H1 (cell line): ENCODE measurements at regions of chr19 and their contacts with region 1.

Region 1: GRCh38 chr19:5967994-5968430 is 9.9 kb downstream of the RANBP3 start:
- DNase-seq: peak in 1 of 2 experiments; percentile 81
- H3K4me3 ChIP-seq: peak overlapping the region in 1 of 4 experiments; percentile 7; a peak in 2 of 8 replicates
- H3K27ac ChIP-seq: peak overlapping the region; percentile 57
- H3K4me1 ChIP-seq: peaks cover 9 to 16% (median 13%) of the 10 kb centered on the region in 4 experiments
- H3K27me3 ChIP-seq: no peaks in the 10 kb centered on the region
- CTCF ChIP-seq: peak; percentile 69 to 82 (median 78)
- EP300 ChIP-seq: no peak
- POLR2A ChIP-seq: no peak
- RAD21 ChIP-seq: peak; percentile 42 to 59

Region 2: GRCh38 chr19:5913739-5914357 is 54.2 kb before region 1 on chr19 and contains the start of gene CAPS:
- CTCF ChIA-PET with region 1: no interaction called
- POLR2A ChIA-PET with region 1: no interaction called
- DNase-seq: no peak
- H3K4me3 ChIP-seq: no peak within 1 kb of the TSS
- H3K27ac ChIP-seq: no peak within 1 kb of the TSS
- H3K4me1 ChIP-seq: no peaks in the 10 kb centered on the region
- H3K27me3 ChIP-seq: no peaks in the 10 kb centered on the region
- CTCF ChIP-seq: no peak
- EP300 ChIP-seq: no peak
- POLR2A ChIP-seq: no peak
- RAD21 ChIP-seq: no peak
- total RNA-seq, gene CAPS: 1.8 and 2.1 TPM in 2 replicates

Region 3: DNA sequence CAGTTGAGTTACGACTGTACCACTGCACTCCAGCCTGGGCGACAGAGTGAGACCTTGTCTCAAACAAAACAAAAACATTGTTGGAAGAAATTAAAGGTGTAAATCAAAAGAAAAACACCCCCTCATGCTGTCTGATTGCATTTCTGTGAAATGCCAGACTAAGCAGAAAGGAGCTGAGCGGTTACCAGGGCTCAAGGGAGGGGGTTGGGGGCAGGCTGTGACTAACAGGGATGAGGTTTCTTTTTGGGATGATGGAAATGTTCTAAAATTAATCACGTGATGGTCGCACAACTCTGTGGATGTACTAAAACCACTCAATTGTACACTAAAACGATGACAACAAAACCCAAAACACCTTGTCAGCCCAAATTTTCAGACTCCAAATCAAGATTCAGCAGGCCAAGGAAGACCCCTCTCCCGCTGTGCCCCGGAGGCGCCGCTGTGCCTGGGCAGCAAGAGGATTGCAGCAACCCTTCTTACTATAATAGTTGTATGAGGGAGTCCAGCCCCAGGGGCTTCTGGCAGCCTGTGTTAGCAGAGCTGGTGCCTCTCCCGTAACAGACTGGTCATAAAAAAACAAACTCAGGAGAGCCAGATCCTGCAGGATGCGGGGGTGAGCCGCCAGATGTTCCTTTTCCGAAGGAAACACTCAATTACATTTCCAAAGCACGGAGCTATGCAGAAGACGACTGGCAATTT is 33.1 kb before region 1 on chr19:
- CTCF ChIA-PET with region 1: interaction called, 12 read pairs
- POLR2A ChIA-PET with region 1: no interaction called
- DNase-seq: no peak
- H3K4me3 ChIP-seq: no peak overlapping the region
- H3K27ac ChIP-seq: no peak overlapping the region
- H3K4me1 ChIP-seq: no peaks in the 10 kb centered on the region
- H3K27me3 ChIP-seq: no peaks in the 10 kb centered on the region
- CTCF ChIP-seq: no peak
- EP300 ChIP-seq: no peak
- POLR2A ChIP-seq: no peak
- RAD21 ChIP-seq: no peak

Region 4: GRCh38 chr19:5947435-5947834 is 20.6 kb before region 1 on chr19:
- CTCF ChIA-PET with region 1: interaction called, 48 read pairs
- POLR2A ChIA-PET with region 1: interaction called, 13 read pairs
- DNase-seq: no peak
- H3K4me3 ChIP-seq: no peak overlapping the region
- H3K27ac ChIP-seq: no peak overlapping the region
- H3K4me1 ChIP-seq: peaks cover 16 to 32% (median 27%) of the 10 kb centered on the region in 4 experiments
- H3K27me3 ChIP-seq: no peaks in the 10 kb centered on the region
- CTCF ChIP-seq: no peak
- EP300 ChIP-seq: no peak
- POLR2A ChIP-seq: no peak
- RAD21 ChIP-seq: no peak

Region 5: DNA sequence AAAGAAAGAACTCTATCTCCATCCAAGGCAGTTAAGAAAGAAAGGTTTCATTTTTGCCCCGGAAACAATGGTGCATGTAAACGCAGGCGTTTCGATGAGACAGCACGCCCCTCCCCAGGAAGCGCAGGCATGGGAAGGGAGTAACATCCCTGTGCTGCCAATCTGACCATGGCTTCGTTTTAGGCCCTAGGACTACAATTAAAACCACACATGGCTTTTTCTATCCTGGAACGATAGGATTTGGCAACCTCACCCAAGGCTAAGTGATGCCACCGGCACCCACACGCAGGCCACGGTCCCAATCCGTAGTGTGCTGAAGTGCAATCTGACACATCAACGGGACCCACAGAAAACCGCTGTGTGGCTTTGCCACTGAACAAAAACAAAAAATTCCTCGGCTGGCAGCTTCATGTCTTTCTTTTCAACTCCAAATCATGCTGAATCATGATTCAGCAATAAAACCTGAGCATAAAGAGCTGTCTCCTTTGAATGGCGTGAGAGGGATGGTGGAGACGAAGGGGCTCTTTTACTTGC is 14.3 kb before region 1 on chr19:
- CTCF ChIA-PET with region 1: interaction called, 48 read pairs
- POLR2A ChIA-PET with region 1: interaction called, 13 read pairs
- DNase-seq: no peak
- H3K4me3 ChIP-seq: no peak overlapping the region; a peak in 1 of 8 replicates
- H3K27ac ChIP-seq: no peak overlapping the region
- H3K4me1 ChIP-seq: peaks cover 33 to 64% (median 50%) of the 10 kb centered on the region in 4 experiments
- H3K27me3 ChIP-seq: no peaks in the 10 kb centered on the region; a peak in 1 of 7 replicates
- CTCF ChIP-seq: no peak
- EP300 ChIP-seq: no peak
- POLR2A ChIP-seq: no peak
- RAD21 ChIP-seq: no peak

Region 6: GRCh38 chr19:5987077-5987818 is 19.2 kb after region 1 on chr19:
- CTCF ChIA-PET with region 1: interaction called, 15 read pairs
- POLR2A ChIA-PET with region 1: interaction called, 4 read pairs
- DNase-seq: peak; percentile 41 to 87
- H3K4me3 ChIP-seq: no peak overlapping the region
- H3K27ac ChIP-seq: no peak overlapping the region
- H3K4me1 ChIP-seq: peaks cover 0 to 5% (median 0%) of the 10 kb centered on the region in 4 experiments; a peak in 4 of 7 replicates
- H3K27me3 ChIP-seq: peaks cover 0 to 3% (median 0%) of the 10 kb centered on the region in 4 experiments; a peak in 3 of 7 replicates
- CTCF ChIP-seq: peak; percentile 55 to 88 (median 88)
- EP300 ChIP-seq: no peak
- POLR2A ChIP-seq: no peak
- RAD21 ChIP-seq: peak; percentile 88 to 90